GM13976 (cell line): ENCODE measurements at regions of chr15 and their contacts with region 1.

Region 1: DNA sequence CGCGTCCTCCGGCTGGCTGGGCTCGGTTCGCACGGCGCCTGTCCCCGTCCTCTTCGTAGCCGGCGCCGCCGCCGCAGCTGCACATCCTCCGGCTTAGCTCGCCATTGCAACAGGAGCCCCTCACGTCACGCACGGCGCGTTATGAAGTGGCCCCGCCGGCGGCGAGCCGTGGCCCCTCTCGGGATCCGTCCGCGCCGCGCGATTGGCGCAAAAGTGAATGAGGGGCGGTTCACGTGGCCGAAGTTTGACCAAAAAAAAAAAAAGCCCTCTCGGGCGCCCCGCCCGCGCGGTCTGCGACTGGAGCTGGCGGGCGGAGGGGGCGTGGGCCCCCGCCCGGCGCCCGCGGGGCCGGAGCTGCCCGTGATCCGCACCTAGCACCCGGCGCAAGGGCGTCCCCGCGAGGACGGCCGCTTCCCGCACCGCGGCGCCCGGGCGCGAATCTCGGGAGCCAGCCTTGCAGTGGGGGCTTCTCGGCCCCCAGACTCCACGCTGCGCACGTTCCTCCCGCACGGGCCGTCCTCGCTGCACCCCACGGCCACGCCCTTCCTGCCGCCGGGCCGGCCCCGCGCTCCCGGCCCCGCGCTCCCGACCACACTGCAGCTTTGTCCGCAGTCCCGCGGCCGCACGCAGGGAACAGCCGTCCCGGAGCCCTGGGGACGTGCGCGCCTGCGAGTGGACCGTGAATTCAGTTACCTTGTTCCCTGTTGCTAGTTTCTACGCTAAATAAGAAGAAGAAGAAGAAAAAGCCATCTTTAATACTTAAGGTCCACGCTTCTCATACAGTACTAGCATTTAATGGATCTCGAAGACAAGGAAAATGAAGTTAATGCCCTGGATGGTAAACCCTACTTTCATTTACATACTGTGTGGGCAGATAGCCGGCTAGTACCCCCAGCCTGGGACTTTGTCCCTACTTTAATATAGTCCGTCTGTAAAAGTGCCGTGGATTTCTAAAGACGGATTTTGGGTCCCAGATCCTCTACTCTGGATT is at the start of gene CHSY1:
- DNase-seq: peak; percentile 89
- CTCF ChIP-seq: peak; percentile 49

Region 2: DNA sequence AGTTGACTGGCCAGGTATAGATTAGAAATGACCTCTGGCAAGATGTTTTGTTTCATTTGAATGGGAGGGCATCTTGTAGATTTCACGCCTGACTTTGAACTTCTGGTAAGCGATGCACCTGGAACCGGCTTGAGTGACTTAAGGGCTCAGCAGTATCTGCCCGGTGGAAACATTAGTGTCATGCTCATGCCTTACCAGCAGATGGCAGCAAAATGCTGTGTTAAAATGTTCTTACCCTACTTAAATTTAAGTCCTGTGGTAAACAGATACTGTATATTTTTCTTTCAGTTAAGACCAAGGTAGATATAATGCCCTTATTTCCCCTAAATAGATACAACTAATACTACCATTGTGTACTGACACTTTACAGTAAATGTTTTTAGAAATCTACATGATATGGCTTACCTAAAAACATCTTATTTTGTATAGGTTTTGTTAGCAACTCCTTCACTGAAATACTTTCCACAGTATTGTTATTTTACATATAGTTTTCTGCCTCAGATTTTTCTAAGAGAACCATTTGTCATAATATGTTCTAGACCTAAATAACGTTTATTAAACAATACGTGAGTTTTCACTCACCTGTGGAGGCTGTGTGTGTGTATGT is 624.2 kb before region 1 on chr15:
- in situ Hi-C with region 1: loop called (anchors 25 kb)
- DNase-seq: peak; percentile 64
- CTCF ChIP-seq: peak; percentile 82

Region 3: DNA sequence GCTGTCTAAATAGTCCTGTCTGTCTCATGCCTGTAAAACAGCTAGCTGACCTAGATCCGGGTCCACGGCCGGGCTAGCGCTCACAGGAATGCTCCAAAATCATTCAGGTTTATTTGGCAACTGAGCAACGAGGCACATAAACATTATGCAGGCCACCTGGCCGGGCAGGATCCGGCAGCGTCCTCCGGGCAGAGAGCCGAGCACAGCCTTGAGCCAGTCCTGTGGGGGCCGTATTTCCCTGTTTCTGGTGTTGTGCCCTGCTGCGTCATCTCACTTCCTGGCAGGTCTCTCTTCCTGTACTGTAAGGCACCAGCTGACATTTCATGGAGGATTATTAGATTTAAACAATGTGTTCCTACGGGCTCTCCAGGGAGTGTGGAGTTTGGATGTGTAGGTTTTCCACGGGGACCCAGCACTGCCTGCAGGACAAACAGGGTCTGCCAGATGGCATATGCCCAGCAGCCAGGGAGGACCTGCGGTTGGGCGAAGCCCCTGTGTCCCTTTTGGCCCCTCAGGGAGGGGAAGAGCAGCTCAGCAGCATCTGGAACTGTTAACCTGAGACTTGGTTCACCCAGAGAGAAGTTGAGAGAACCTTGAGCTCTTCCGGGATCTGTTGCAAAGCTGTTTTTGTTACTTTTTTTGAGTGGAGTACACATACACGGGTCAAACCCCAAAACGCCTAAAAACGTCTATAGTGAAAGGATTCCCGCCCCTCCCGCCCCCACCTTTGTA is 349.5 kb before region 1 on chr15:
- in situ Hi-C with region 1: loop called (anchors 10 kb)
- DNase-seq: peak; percentile 21
- CTCF ChIP-seq: no peak